SK-N-SH (cell line): ENCODE measurements at regions of chr11 and their contacts with region 1.

Region 1: DNA sequence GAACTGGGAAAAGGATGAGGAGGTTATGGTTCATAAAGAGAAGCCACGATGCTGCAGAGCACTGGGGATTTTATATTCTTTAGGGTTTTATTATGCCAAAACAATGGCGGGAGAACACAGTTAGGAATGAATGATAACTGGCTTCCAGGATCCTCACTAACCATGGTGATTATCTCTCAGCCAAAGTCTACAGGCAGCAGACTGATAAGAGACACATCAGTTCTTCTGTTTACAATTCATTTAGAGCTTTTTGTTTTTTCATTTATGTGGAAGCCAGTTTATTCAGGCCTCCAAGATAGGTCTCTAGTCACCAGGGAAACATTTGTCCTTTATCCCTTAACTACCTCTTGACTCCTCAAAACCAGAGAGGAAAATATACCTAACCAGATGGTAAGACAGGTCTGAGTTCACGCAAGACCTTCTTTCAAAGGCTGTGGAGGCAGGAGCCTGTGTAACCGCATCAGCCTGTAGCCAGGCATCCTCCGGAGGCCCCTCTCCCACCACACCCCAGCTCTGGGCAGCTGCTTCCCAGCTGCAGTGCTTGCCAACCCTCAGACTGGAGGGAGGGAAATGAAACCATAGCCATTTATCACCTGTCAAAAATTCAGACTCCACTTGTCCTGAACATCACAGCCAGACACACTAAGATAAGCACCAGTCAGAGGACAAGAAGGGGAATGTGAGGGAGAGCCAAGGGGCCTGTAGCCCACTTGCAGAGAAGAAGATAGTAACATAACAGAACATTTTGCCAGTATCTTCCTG is 57.2 kb upstream of the FAM181B start:
- DNase-seq: peak; percentile 65
- H3K4me3 ChIP-seq: no peak overlapping the region
- H3K27ac ChIP-seq: peak overlapping the region; percentile 15 to 99; a peak in 3 of 4 replicates
- H3K4me1 ChIP-seq: peaks cover 0 to 28% of the 10 kb centered on the region in 2 experiments; a peak in 2 of 4 replicates
- H3K27me3 ChIP-seq: no peaks in the 10 kb centered on the region
- CTCF ChIP-seq: no peak
- EP300 ChIP-seq: peak in 1 of 2 experiments; percentile 58; a peak in 2 of 4 replicates
- RAD21 ChIP-seq: no peak

Region 2: DNA sequence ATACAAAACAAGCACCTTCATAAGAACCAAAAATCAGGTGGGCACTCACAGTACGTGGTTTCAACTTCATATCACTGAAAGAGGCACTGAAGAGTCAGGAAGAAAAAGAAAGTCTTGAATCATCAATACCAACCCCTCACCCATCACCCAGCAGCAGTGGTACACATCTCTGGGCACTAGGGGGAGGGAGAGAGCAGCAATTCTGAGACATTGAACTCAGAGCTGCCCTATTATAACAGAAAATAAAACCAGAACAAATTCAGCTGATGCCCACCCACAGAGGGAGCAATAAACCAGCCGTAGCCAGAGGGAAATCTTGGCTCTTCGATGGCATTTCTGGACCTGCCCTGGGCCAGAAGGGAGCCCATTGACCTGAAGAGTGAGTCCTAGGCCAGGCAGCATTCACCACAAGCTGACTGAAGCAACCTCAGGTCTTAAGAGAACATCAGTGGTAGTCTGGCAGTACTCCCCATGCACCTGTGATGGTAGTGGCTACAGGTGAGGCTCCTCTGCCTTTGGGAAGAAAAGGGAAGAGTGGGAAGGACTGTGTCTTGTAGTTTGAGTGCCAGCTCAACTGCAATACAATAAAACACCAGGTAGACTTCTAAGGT is 15.1 kb before region 1 on chr11:
- CTCF ChIA-PET with region 1: interaction called, 10 read pairs
- POLR2A ChIA-PET with region 1: no interaction called
- DNase-seq: peak; percentile 32
- H3K4me3 ChIP-seq: peak overlapping the region in 1 of 2 experiments; percentile 16; a peak in 1 of 4 replicates
- H3K27ac ChIP-seq: no peak overlapping the region
- H3K4me1 ChIP-seq: no peaks in the 10 kb centered on the region
- H3K27me3 ChIP-seq: no peaks in the 10 kb centered on the region
- CTCF ChIP-seq: peak; percentile 64
- EP300 ChIP-seq: no peak
- RAD21 ChIP-seq: peak; percentile 58